CD8-positive, alpha-beta T cell (primary cell): ENCODE measurements at regions of chr2 and their contacts with region 1.

Region 1: GRCh38 chr2:181517685-181518301 is 60.6 kb downstream of the ITGA4 start:
- DNase-seq: peak in 7 of 9 experiments; percentile 4 to 53 (median 21)
- ATAC-seq: peak; percentile 58
- H3K4me3 ChIP-seq: no peak overlapping the region
- H3K4me3 Mint-ChIP-seq: peak overlapping the region; percentile 2
- H3K27ac ChIP-seq: peak overlapping the region in 1 of 2 experiments; percentile 17
- H3K27ac Mint-ChIP-seq: peak overlapping the region; percentile 87
- H3K4me1 ChIP-seq: peaks cover 31% of the 10 kb centered on the region
- H3K4me1 Mint-ChIP-seq: peaks cover 51% of the 10 kb centered on the region
- H3K27me3 ChIP-seq: no peaks in the 10 kb centered on the region
- H3K27me3 Mint-ChIP-seq: no peaks in the 10 kb centered on the region
- CTCF ChIP-seq: no peak

Region 2: DNA sequence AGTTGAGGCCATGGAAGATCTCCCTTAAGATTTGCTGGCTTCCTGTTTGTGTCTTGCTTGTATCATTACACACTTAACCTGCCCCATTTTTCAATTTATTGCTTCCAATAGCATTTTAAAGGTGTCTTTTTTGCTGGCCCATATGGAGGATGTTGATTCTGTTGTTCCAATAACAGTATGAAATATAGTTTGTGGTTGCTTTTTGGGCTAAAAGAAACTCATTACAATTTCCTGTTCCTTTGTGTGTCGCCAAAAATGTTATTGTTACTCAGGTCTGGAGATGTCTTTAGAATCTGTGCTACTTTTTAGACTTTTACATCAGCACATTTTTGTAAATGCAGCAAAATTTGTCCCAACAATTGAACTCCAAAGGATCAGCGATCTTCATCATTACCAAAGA is 294.6 kb before region 1 on chr2:
- CTCF ChIA-PET with region 1: no interaction called
- POLR2A ChIA-PET with region 1: no interaction called
- intact Hi-C with region 1: no loop called
- DNase-seq: peak in 2 of 9 experiments; percentile 8 to 22
- ATAC-seq: peak; percentile 23
- H3K4me3 ChIP-seq: no peak overlapping the region
- H3K4me3 Mint-ChIP-seq: peak overlapping the region; percentile 62
- H3K27ac ChIP-seq: peak overlapping the region in 1 of 2 experiments; percentile 26
- H3K27ac Mint-ChIP-seq: peak overlapping the region; percentile 92
- H3K4me1 ChIP-seq: peaks cover 29% of the 10 kb centered on the region
- H3K4me1 Mint-ChIP-seq: peaks cover 46% of the 10 kb centered on the region
- H3K27me3 ChIP-seq: no peaks in the 10 kb centered on the region
- H3K27me3 Mint-ChIP-seq: no peaks in the 10 kb centered on the region
- CTCF ChIP-seq: no peak

Region 3: DNA sequence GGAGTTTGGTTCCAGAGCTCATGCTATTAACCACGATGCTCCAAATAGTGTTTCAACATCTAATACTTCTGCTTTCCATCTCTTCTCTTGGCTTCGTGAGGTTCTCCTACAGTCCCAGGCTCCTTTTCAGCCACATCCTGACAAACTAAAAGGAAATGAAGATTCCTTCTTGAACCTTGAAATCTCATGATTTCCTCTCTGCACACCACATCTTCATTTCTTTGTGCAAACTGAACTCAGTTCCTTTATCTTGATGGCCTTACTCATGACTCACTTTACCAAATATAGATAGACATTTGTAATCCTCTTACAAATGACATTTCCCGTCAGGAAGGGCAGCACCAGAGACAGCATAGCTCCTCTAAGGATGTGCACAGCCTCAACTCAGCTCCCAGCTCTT is 110.6 kb before region 1 on chr2:
- CTCF ChIA-PET with region 1: no interaction called
- POLR2A ChIA-PET with region 1: no interaction called
- intact Hi-C with region 1: no loop called
- DNase-seq: no peak
- ATAC-seq: no peak
- H3K4me3 ChIP-seq: no peak overlapping the region
- H3K4me3 Mint-ChIP-seq: no peak overlapping the region
- H3K27ac ChIP-seq: no peak overlapping the region
- H3K27ac Mint-ChIP-seq: no peak overlapping the region
- H3K4me1 ChIP-seq: no peaks in the 10 kb centered on the region
- H3K4me1 Mint-ChIP-seq: peaks cover 17% of the 10 kb centered on the region
- H3K27me3 ChIP-seq: no peaks in the 10 kb centered on the region
- H3K27me3 Mint-ChIP-seq: no peaks in the 10 kb centered on the region
- CTCF ChIP-seq: no peak

Region 4: GRCh38 chr2:181483876-181484275 is 33.9 kb before region 1 on chr2:
- CTCF ChIA-PET with region 1: no interaction called
- POLR2A ChIA-PET with region 1: no interaction called
- intact Hi-C with region 1: loop called (anchors 5 kb)
- DNase-seq: no peak
- ATAC-seq: no peak
- H3K4me3 ChIP-seq: no peak overlapping the region
- H3K4me3 Mint-ChIP-seq: no peak overlapping the region
- H3K27ac ChIP-seq: no peak overlapping the region
- H3K27ac Mint-ChIP-seq: peak overlapping the region; percentile 69
- H3K4me1 ChIP-seq: no peaks in the 10 kb centered on the region
- H3K4me1 Mint-ChIP-seq: peaks cover 26% of the 10 kb centered on the region
- H3K27me3 ChIP-seq: no peaks in the 10 kb centered on the region
- H3K27me3 Mint-ChIP-seq: no peaks in the 10 kb centered on the region
- CTCF ChIP-seq: no peak

Region 5: GRCh38 chr2:181536730-181537129 is 18.9 kb after region 1 on chr2:
- CTCF ChIA-PET with region 1: no interaction called
- POLR2A ChIA-PET with region 1: interaction called, 12 read pairs
- intact Hi-C with region 1: loop called in 1 of 2 experiments (anchors 2 kb)
- DNase-seq: no peak
- ATAC-seq: no peak
- H3K4me3 ChIP-seq: no peak overlapping the region
- H3K4me3 Mint-ChIP-seq: no peak overlapping the region
- H3K27ac ChIP-seq: no peak overlapping the region
- H3K27ac Mint-ChIP-seq: no peak overlapping the region
- H3K4me1 ChIP-seq: no peaks in the 10 kb centered on the region
- H3K4me1 Mint-ChIP-seq: peaks cover 4% of the 10 kb centered on the region
- H3K27me3 ChIP-seq: no peaks in the 10 kb centered on the region
- H3K27me3 Mint-ChIP-seq: no peaks in the 10 kb centered on the region
- CTCF ChIP-seq: no peak

Region 6: GRCh38 chr2:181552808-181553207 is 35.0 kb after region 1 on chr2:
- CTCF ChIA-PET with region 1: no interaction called
- POLR2A ChIA-PET with region 1: no interaction called
- intact Hi-C with region 1: no loop called
- DNase-seq: no peak
- ATAC-seq: no peak
- H3K4me3 ChIP-seq: no peak overlapping the region
- H3K4me3 Mint-ChIP-seq: no peak overlapping the region
- H3K27ac ChIP-seq: no peak overlapping the region
- H3K27ac Mint-ChIP-seq: no peak overlapping the region
- H3K4me1 ChIP-seq: no peaks in the 10 kb centered on the region
- H3K4me1 Mint-ChIP-seq: no peaks in the 10 kb centered on the region
- H3K27me3 ChIP-seq: no peaks in the 10 kb centered on the region
- H3K27me3 Mint-ChIP-seq: no peaks in the 10 kb centered on the region
- CTCF ChIP-seq: no peak

Region 7: DNA sequence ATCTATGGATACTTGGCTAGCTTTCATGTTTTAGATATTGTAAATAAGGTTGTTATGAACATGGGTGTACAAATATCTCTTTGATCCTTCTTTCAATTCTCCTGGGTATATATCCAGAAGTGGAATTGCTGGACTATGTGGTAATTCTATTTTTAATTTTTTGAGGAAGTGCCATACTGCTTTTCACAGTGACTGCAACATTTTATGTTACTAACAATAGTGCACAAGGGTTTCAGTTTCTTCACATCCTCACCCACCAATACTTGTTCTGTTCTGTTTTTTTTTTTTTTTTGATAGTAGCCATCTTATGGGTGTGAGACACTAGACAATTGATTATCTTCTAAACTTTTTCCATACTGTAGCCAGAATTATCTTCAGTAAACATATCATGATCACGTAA is 179.8 kb after region 1 on chr2:
- CTCF ChIA-PET with region 1: no interaction called
- POLR2A ChIA-PET with region 1: no interaction called
- intact Hi-C with region 1: no loop called
- DNase-seq: no peak
- ATAC-seq: no peak
- H3K4me3 ChIP-seq: no peak overlapping the region
- H3K4me3 Mint-ChIP-seq: no peak overlapping the region
- H3K27ac ChIP-seq: no peak overlapping the region
- H3K27ac Mint-ChIP-seq: no peak overlapping the region
- H3K4me1 ChIP-seq: no peaks in the 10 kb centered on the region
- H3K4me1 Mint-ChIP-seq: no peaks in the 10 kb centered on the region
- H3K27me3 ChIP-seq: peaks cover 3 to 4% of the 10 kb centered on the region in 2 experiments
- H3K27me3 Mint-ChIP-seq: peaks cover 20% of the 10 kb centered on the region
- CTCF ChIP-seq: no peak